Naive thymus-derived CD4-positive, alpha-beta T cell (primary cell): ENCODE measurements at regions of chr10 and their contacts with region 1.

Region 1: DNA sequence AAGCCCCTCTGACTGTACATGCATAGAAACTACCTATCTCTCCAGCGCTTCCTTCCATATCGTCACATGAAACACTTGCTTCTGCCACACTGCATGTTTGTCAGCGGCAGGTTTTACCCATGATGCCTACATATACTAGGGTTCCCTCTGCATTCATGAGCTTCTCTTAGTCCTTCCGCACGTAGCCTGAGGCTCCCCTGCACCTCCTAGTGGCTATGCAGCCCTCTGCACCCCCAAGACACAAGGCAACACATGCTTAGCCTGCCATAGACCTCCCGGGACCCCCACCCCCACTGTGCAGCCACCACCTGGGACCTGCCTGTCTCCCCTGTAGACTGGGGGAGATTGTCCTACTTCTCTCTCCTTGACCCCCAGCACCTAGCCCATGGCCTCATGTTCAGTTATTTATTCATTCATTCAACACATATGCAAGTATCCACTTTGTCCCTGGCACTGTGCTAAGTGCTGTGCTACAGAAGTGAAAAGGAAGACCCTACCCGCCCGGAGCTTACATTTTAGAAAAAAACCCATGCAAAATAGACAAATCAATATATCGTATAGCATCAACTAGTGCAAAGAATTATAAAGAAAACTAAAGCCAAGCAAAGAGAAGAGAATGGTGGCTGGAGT is 23.5 kb downstream of the TMEM273 start:
- DNase-seq: peak in 5 of 9 donors; percentile 0 to 42 (median 3)
- ATAC-seq: peak; percentile 80
- H3K4me3 ChIP-seq: no peak overlapping the region
- H3K4me3 Mint-ChIP-seq: peak overlapping the region in 1 of 10 donors; percentile 2
- H3K27ac ChIP-seq: no peak overlapping the region
- H3K27ac Mint-ChIP-seq: peak overlapping the region in 2 of 9 donors; percentile 3 to 7
- H3K4me1 ChIP-seq: no peaks in the 10 kb centered on the region
- H3K4me1 Mint-ChIP-seq: peaks cover 0 to 18% (median 5%) of the 10 kb centered on the region in 7 donors
- H3K27me3 ChIP-seq: no peaks in the 10 kb centered on the region
- H3K27me3 Mint-ChIP-seq: peaks cover 0 to 7% (median 3%) of the 10 kb centered on the region in 5 donors

Region 2: DNA sequence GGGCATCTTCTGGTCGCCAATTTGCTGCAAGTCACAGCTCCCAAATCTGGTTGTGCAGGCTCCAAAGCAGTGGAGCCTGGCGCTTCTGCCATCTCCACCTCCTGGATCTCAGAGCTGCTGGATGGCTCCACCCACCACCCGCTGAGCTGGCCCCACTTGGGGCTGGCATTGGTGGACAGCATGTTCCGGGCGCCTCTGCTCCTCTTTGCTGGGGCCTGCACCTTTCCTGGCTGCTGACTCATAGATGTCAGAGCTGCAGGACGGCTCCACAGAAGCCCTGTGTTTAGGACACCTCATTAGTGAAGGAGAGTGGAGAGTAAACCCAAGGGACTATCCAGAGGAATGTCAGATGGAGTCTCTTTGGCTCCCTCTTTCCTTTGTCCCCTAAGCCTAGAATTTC is 830.8 kb before region 1 on chr10:
- CTCF ChIA-PET with region 1: no interaction called
- POLR2A ChIA-PET with region 1: no interaction called
- intact Hi-C with region 1: no loop called
- DNase-seq: no peak
- ATAC-seq: no peak
- H3K4me3 ChIP-seq: no peak overlapping the region
- H3K4me3 Mint-ChIP-seq: no peak overlapping the region
- H3K27ac ChIP-seq: no peak overlapping the region
- H3K27ac Mint-ChIP-seq: no peak overlapping the region
- H3K4me1 ChIP-seq: peaks cover 0 to 5% of the 10 kb centered on the region in 2 donors
- H3K4me1 Mint-ChIP-seq: peaks cover 13 to 68% (median 57%) of the 10 kb centered on the region in 7 donors
- H3K27me3 ChIP-seq: no peaks in the 10 kb centered on the region
- H3K27me3 Mint-ChIP-seq: no peaks in the 10 kb centered on the region

Region 3: DNA sequence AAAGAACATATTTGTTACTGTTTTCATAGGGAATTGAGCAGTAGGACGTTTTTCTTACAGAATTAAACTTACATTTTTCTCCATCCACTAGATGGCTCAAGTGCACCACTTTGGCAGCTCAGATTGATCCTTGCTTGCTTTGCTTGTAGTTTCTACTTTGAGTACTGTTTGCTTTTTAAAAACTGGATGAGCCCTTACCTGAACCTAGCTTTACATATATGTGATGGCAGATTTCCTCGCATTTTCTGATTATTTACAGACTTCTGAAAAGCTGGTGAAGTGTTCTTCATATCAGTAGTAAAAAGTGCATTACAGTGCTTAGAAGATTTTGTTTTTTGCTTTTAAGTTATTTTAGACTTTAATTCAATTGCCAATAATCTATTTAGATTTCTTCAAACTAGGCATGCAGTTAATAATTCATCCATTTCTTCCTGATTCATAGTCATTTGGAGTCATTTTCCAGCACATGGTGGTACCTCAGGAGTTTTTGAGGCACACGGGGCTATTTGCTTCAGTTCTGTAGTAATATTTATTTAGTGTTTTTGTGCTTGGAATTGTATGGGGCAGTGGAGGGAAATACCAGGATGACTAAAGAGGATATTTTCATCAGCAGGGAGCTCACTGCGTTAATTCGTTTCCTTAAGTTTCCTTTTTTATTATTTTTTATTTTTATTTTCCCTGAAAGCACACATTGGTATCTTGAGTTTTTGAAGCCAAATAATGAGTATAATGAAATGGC is 800.9 kb before region 1 on chr10:
- CTCF ChIA-PET with region 1: no interaction called
- POLR2A ChIA-PET with region 1: no interaction called
- intact Hi-C with region 1: loop called in 1 of 2 experiments (anchors 5 kb)
- DNase-seq: peak in 6 of 9 donors; percentile 7 to 45 (median 37)
- ATAC-seq: peak; percentile 51
- H3K4me3 ChIP-seq: no peak overlapping the region
- H3K4me3 Mint-ChIP-seq: no peak overlapping the region
- H3K27ac ChIP-seq: no peak overlapping the region
- H3K27ac Mint-ChIP-seq: no peak overlapping the region
- H3K4me1 ChIP-seq: no peaks in the 10 kb centered on the region
- H3K4me1 Mint-ChIP-seq: peaks cover 4 to 59% (median 49%) of the 10 kb centered on the region in 7 donors
- H3K27me3 ChIP-seq: no peaks in the 10 kb centered on the region
- H3K27me3 Mint-ChIP-seq: no peaks in the 10 kb centered on the region

Region 4: DNA sequence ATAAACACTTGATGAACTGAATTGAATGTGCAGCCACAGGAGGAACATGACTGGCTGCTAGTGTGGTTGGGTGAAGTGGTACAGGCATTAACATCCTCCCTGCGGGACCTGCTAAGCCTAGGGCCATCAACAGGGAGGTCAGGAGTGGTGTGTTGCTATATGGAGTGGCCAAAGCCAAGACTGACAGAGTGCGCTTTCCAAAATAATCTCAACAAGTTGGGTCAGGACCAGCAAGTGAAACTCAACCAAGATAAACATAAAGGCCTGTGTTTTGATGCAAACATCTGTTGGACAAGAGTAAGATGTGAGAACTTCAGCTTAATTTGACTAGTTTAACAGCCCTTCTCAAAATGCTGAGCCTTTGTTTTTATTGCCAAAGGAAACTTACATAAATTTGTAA is 382.3 kb before region 1 on chr10:
- CTCF ChIA-PET with region 1: no interaction called
- POLR2A ChIA-PET with region 1: no interaction called
- intact Hi-C with region 1: no loop called
- DNase-seq: no peak
- ATAC-seq: no peak
- H3K4me3 ChIP-seq: no peak overlapping the region
- H3K4me3 Mint-ChIP-seq: no peak overlapping the region
- H3K27ac ChIP-seq: no peak overlapping the region
- H3K27ac Mint-ChIP-seq: no peak overlapping the region
- H3K4me1 ChIP-seq: no peaks in the 10 kb centered on the region
- H3K4me1 Mint-ChIP-seq: peaks cover 0 to 2% (median 0%) of the 10 kb centered on the region in 7 donors
- H3K27me3 ChIP-seq: no peaks in the 10 kb centered on the region
- H3K27me3 Mint-ChIP-seq: peaks cover 0 to 17% (median 0%) of the 10 kb centered on the region in 5 donors

Region 5: GRCh38 chr10:48981310-48981907 is 183.3 kb before region 1 on chr10:
- CTCF ChIA-PET with region 1: no interaction called
- POLR2A ChIA-PET with region 1: no interaction called
- intact Hi-C with region 1: loop called in 1 of 2 experiments (anchors 1 kb)
- DNase-seq: peak in 2 of 9 donors; percentile 8 to 43
- ATAC-seq: peak; percentile 57
- H3K4me3 ChIP-seq: no peak overlapping the region
- H3K4me3 Mint-ChIP-seq: no peak overlapping the region
- H3K27ac ChIP-seq: no peak overlapping the region
- H3K27ac Mint-ChIP-seq: no peak overlapping the region
- H3K4me1 ChIP-seq: no peaks in the 10 kb centered on the region
- H3K4me1 Mint-ChIP-seq: no peaks in the 10 kb centered on the region
- H3K27me3 ChIP-seq: no peaks in the 10 kb centered on the region
- H3K27me3 Mint-ChIP-seq: no peaks in the 10 kb centered on the region

Region 6: DNA sequence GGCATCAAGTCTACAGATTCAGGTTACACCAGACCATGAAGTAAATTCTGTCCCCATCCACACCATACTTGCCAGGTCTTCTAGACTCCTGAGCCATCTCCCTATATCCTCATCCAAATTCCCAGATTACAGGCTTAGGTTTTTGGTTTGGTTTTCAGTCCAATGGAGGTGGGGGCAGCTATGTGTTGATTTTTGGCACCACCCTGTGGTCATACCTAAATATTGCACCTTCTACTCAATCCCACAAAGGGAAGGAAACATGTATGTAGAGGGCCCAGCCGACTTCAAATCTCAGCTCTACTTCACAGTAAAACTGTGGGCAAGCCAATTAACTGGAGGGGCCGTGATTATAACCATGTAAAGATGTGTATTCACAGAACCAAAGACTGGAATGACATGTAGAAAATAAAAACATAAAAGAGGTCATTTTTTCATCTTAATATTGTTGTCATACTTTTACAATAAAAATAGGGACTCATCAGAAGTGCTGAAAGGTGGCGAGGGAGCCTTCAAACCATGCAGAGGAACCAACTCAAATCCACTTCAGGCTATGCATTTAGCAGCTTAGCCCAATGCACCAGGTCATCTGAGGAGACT is 354.4 kb after region 1 on chr10:
- CTCF ChIA-PET with region 1: no interaction called
- POLR2A ChIA-PET with region 1: no interaction called
- intact Hi-C with region 1: loop called in 1 of 2 experiments (anchors 10 kb)
- DNase-seq: peak in 5 of 9 donors; percentile 25 to 45 (median 43)
- ATAC-seq: peak; percentile 80
- H3K4me3 ChIP-seq: no peak overlapping the region
- H3K4me3 Mint-ChIP-seq: no peak overlapping the region
- H3K27ac ChIP-seq: no peak overlapping the region
- H3K27ac Mint-ChIP-seq: no peak overlapping the region
- H3K4me1 ChIP-seq: no peaks in the 10 kb centered on the region
- H3K4me1 Mint-ChIP-seq: peaks cover 0 to 22% (median 4%) of the 10 kb centered on the region in 7 donors
- H3K27me3 ChIP-seq: no peaks in the 10 kb centered on the region
- H3K27me3 Mint-ChIP-seq: no peaks in the 10 kb centered on the region